B cell (primary cell): ENCODE measurements at regions of chr14 and their contacts with region 1.

Region 1: DNA sequence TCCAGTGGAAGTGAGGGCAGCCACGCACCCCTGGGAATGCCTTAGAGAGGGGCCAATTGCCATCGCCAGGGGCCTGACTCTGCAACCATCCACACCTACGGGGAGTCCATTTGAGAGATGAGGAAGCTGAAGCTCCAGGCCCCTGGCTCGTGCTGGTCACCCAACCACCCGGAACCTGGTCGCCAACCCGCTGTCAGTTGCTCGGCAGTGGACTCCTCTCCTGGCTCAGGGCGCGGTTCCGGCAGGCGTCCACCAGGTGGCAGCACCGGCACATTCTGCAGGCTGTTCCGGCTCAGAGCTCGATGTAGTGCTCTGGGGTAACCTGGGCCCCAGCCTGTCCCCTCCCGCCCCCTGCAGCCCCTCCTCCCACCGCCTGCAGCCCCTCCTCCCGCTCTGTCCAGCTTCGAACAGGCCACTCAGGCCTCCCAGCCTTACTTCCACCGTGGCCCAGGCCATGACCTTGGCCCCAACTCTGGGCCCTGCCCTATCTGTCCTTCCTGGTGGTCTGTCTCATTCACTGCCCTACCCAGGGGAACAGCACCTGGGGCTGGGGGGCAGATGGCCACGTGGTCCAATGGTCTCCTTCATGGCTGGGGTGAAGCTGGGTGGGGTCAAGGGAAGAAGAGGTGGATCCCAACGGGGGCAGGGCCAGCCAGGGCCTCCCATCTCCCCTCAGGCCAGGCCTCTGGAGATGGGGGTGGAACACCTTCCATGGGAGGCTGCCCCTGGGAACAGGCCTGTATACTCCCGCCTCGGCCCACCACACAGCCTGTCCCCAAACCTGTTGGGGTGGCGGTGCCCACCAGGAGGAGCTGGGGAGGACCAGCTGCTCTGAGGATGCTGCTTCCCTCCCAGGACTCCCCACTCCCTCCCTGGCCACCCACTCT is 15.7 kb downstream of the SIVA1 start:
- DNase-seq: peak; percentile 88
- ATAC-seq: peak; percentile 95
- H3K4me3 ChIP-seq: no peak overlapping the region
- H3K4me3 Mint-ChIP-seq: no peak overlapping the region
- H3K27ac ChIP-seq: no peak overlapping the region
- H3K27ac Mint-ChIP-seq: no peak overlapping the region
- H3K4me1 ChIP-seq: peaks cover 0 to 8% of the 10 kb centered on the region in 2 donors
- H3K4me1 Mint-ChIP-seq: peaks cover 8% of the 10 kb centered on the region
- H3K27me3 ChIP-seq: no peaks in the 10 kb centered on the region
- H3K27me3 Mint-ChIP-seq: no peaks in the 10 kb centered on the region
- CTCF ChIP-seq: peak; percentile 95

Region 2: DNA sequence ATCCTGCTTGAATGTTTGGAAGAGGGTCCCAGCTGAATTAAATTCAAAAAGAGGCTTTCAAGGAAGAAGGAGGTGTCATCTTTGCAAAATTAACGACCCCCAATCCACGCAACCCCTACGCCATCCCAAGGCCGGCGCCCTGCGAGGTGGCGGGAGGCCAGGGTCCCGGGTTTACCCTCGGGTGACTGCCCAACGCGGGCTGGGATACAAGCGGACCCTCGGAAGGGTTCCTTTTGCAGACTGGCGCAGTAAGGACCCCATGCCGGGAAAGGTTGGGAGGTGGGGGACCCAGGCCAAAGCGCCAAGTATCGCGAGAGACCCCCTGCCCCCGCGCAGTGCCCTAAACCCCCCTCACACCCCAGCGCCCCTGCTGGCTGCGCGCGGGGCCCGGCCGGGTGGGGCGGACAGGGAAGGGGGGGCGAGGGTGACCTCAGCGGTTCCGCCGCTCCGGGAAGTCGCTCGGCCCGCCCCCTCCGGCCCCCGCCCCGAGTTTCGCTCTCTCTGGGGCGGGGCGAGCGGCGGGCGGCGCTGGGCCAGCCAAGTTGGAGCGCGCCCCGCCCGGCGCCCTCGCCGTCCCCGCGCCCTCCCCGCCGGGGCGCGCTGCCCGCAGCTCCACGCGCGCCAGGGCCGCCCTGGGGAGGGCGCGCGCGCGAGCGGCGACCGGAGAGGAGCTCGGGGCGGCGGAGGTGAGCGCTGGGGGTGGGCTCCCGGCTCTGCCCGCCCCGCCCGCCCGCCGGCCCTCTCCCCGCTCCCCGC is 31.5 kb after region 1 on chr14:
- CTCF ChIA-PET with region 1: interaction called, 8 read pairs
- POLR2A ChIA-PET with region 1: no interaction called
- intact Hi-C with region 1: loop called (anchors 1 kb)
- DNase-seq: peak; percentile 91
- ATAC-seq: peak; percentile 76
- H3K4me3 ChIP-seq: peak overlapping the region in 4 of 5 experiments; percentile 49 to 85 (median 76)
- H3K4me3 Mint-ChIP-seq: peak overlapping the region; percentile 81
- H3K27ac ChIP-seq: peak overlapping the region; percentile 72 to 88
- H3K27ac Mint-ChIP-seq: peak overlapping the region; percentile 80
- H3K4me1 ChIP-seq: peaks cover 19 to 54% of the 10 kb centered on the region in 2 donors
- H3K4me1 Mint-ChIP-seq: peaks cover 44% of the 10 kb centered on the region
- H3K27me3 ChIP-seq: no peaks in the 10 kb centered on the region
- H3K27me3 Mint-ChIP-seq: no peaks in the 10 kb centered on the region
- CTCF ChIP-seq: peak; percentile 40

Region 3: DNA sequence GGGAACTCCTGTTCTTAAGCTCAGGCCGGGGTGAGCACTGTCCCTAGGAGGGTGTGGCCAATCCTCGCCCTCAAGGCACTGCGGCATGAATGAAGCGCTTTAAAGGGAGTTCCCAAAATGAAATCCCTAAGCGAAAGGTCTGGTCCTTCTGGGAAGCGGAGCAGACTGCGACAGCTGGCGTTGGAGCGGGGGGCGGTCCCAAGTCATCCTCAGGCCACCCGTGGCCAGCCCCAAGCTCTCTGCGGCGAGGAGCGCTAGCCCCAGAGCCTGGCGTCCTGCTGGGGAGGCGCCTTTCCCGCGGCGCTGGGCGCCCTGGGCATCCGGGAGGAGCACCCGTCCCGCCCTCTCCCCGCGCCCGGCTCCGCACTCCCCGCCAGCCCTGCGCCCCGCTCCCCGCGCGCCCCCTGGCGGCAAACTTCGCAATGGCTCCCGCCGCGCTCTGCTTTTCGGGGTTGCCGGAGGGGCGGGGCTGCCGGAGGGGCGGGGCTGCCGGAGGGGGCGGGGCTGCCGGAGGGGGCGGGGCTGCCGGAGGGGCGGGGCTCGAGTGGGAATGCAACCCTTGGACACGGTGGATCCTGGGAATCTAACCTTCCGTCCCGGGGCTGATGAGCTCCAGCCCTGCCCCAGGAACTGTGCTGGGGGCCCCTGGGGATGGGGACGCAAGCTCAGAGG is 57.6 kb after region 1 on chr14:
- CTCF ChIA-PET with region 1: interaction called, 89 read pairs
- POLR2A ChIA-PET with region 1: interaction called, 4 read pairs
- intact Hi-C with region 1: loop called (anchors 1 kb)
- DNase-seq: peak; percentile 91
- ATAC-seq: peak; percentile 88
- H3K4me3 ChIP-seq: peak overlapping the region; percentile 39 to 78 (median 64)
- H3K4me3 Mint-ChIP-seq: peak overlapping the region; percentile 85
- H3K27ac ChIP-seq: no peak overlapping the region
- H3K27ac Mint-ChIP-seq: peak overlapping the region; percentile 46
- H3K4me1 ChIP-seq: peaks cover 19 to 21% of the 10 kb centered on the region in 2 donors
- H3K4me1 Mint-ChIP-seq: peaks cover 29% of the 10 kb centered on the region
- H3K27me3 ChIP-seq: peaks cover 0 to 21% (median 10%) of the 10 kb centered on the region in 4 experiments
- H3K27me3 Mint-ChIP-seq: peaks cover 10% of the 10 kb centered on the region
- CTCF ChIP-seq: peak; percentile 78

Region 4: DNA sequence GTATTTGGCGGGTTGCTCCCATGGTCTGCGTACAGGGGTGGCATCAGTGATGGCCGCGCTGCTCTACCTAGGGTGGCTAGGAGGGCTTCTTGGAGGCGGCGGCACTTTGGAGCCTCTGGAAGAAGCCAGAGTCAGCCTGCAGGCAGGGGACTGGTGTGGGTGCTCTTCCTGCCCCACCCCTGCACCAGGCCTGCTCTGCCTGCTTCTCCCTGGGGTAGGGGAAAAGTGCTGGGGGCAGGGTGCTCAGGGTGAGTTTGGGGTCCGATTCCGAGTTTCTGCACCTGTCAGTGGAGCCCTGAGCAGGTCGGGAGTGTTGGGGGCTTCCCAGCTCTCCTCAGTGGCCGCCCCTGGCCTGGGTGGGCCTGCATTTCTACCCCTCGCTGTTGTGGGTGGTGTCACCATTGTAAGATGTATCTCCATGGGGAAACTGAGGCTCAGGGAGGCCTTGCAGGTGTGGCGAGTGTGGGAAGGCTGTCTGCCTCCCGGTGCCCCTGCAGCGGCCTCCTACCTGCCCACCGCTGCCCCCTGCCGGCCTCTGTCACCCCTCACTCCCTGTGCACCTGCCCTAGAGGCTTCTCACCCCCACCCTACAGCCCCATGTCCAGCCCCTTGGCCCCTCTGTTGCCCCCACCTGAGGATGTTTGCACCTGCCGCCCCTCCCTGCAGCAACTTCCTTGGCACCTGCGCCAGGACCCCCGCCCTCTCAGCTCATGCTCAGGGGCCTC is 101.9 kb after region 1 on chr14:
- CTCF ChIA-PET with region 1: interaction called, 12 read pairs
- POLR2A ChIA-PET with region 1: no interaction called
- intact Hi-C with region 1: no loop called
- DNase-seq: peak; percentile 53
- ATAC-seq: peak; percentile 40
- H3K4me3 ChIP-seq: no peak overlapping the region
- H3K4me3 Mint-ChIP-seq: no peak overlapping the region
- H3K27ac ChIP-seq: no peak overlapping the region
- H3K27ac Mint-ChIP-seq: no peak overlapping the region
- H3K4me1 ChIP-seq: peaks cover 15 to 23% of the 10 kb centered on the region in 2 donors
- H3K4me1 Mint-ChIP-seq: peaks cover 21% of the 10 kb centered on the region
- H3K27me3 ChIP-seq: peaks cover 0 to 64% (median 21%) of the 10 kb centered on the region in 4 experiments
- H3K27me3 Mint-ChIP-seq: peaks cover 35% of the 10 kb centered on the region
- CTCF ChIP-seq: peak; percentile 23